ENCODE measurements at regions of chr17 and their contacts with region 1.

Region 1: GRCh38 chr17:75632863-75633485 is at the start of gene SMIM5:
- DNase-seq: peak; percentile 94
- ATAC-seq: peak; percentile 71
- H3K4me3 Mint-ChIP-seq: peak within 1 kb of the TSS; percentile 24; the same call in 1 of the 2 replicates
- H3K27ac Mint-ChIP-seq: peak within 1 kb of the TSS; percentile 63; the same call in 1 of the 2 replicates
- H3K4me1 Mint-ChIP-seq: peaks cover 11% of the 10 kb centered on the region
- H3K27me3 Mint-ChIP-seq: no peaks in the 10 kb centered on the region
- CTCF ChIP-seq: peak; percentile 94
- total RNA-seq, gene SMIM5: 0.05 TPM in 1 of 3 replicates, not detected in the others

Region 2: GRCh38 chr17:75447951-75448856 is 184.8 kb before region 1 on chr17:
- CTCF ChIA-PET with region 1: no interaction called
- POLR2A ChIA-PET with region 1: no interaction called
- DNase-seq: no peak
- ATAC-seq: no peak
- H3K4me3 Mint-ChIP-seq: no peak overlapping the region
- H3K27ac Mint-ChIP-seq: no peak overlapping the region
- H3K4me1 Mint-ChIP-seq: no peaks in the 10 kb centered on the region
- H3K27me3 Mint-ChIP-seq: no peaks in the 10 kb centered on the region
- CTCF ChIP-seq: no peak

Region 3: DNA sequence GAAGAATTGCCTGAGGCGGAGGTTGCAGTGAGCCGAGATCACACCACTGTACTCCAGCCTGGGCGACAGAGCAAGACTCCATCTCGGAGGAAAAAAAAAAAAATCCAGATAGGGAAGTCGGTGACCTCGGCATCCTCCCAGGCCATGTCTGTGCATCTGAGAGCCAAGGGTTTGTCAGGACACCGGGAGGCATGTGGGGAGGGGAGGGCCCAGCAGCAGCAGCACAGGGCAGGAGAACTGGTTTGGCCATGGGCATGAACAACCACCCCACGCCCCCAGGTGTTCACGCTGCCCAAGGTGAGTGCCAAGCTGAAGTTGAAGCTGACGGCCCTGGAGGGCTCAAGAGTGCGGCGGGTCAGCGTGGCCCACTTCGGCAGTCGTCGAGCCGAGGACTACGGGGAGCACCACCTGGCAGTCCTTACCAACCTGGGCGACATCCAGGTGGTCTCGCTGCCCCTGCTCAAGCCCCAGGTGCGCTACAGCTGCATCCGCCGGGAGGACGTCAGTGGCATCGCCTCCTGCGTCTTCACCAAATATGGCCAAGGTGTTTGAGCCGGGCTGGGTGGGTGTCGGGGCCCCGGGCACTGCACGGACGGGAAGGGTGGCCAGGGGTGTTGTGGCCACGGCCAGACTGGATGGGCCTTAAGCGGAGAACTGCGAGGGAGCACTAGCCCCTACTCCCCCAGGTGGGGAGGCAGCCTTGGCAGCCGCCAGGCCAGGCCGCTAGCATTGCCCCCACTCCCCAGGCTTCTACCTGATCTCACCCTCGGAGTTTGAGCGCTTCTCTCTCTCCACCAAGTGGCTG is 60.0 kb before region 1 on chr17:
- CTCF ChIA-PET with region 1: interaction called, 10 read pairs
- POLR2A ChIA-PET with region 1: no interaction called
- DNase-seq: no peak
- ATAC-seq: no peak
- H3K4me3 Mint-ChIP-seq: no peak overlapping the region
- H3K27ac Mint-ChIP-seq: no peak overlapping the region
- H3K4me1 Mint-ChIP-seq: no peaks in the 10 kb centered on the region
- H3K27me3 Mint-ChIP-seq: no peaks in the 10 kb centered on the region
- CTCF ChIP-seq: no peak

Region 4: GRCh38 chr17:75652915-75653549 is 20.1 kb after region 1 on chr17:
- CTCF ChIA-PET with region 1: interaction called, 456 read pairs
- POLR2A ChIA-PET with region 1: interaction called, 9 read pairs
- DNase-seq: peak; percentile 76
- ATAC-seq: peak; percentile 99
- H3K4me3 Mint-ChIP-seq: no peak overlapping the region
- H3K27ac Mint-ChIP-seq: peak overlapping the region; percentile 71; the same call in 1 of the 2 replicates
- H3K4me1 Mint-ChIP-seq: no peaks in the 10 kb centered on the region
- H3K27me3 Mint-ChIP-seq: no peaks in the 10 kb centered on the region
- CTCF ChIP-seq: peak; percentile 66; the same call in 1 of the 2 replicates

Region 5: GRCh38 chr17:75693500-75694481 is 60.8 kb after region 1 on chr17:
- CTCF ChIA-PET with region 1: interaction called, 28 read pairs
- POLR2A ChIA-PET with region 1: no interaction called
- DNase-seq: peak; percentile 24
- ATAC-seq: peak; percentile 81
- H3K4me3 Mint-ChIP-seq: no peak overlapping the region
- H3K27ac Mint-ChIP-seq: peak overlapping the region; percentile 53
- H3K4me1 Mint-ChIP-seq: peaks cover 16% of the 10 kb centered on the region
- H3K27me3 Mint-ChIP-seq: no peaks in the 10 kb centered on the region
- CTCF ChIP-seq: no peak

Region 6: GRCh38 chr17:75758117-75758926 is 125.3 kb after region 1 on chr17:
- CTCF ChIA-PET with region 1: interaction called, 94 read pairs
- POLR2A ChIA-PET with region 1: no interaction called
- DNase-seq: peak; percentile 41
- ATAC-seq: peak; percentile 68
- H3K4me3 Mint-ChIP-seq: no peak overlapping the region
- H3K27ac Mint-ChIP-seq: no peak overlapping the region
- H3K4me1 Mint-ChIP-seq: peaks cover 13% of the 10 kb centered on the region
- H3K27me3 Mint-ChIP-seq: peaks cover 5% of the 10 kb centered on the region
- CTCF ChIP-seq: no peak